ENCODE measurements at regions of chr2 and their contacts with region 1.

Region 1: DNA sequence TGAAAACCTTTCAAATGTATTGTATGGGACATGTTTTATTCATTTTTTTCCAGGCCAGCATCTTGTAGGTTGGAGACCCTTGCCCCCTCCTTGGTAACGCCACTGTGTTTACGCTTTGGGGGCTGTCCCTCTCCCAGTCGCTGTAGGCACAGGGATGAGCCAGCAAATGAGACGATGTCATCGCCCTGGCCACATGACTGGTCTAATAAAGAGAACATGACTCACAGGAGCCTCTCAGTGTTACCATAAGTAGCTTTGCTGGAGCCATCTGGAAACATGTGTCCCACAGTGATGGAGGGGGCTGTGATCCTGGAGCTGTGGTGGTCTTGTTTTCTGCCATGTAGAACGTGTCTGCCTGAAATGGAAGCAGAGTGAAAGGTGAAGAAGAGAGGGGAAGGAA is 78.9 kb downstream of the CD8B2 start:
- DNase-seq: peak; percentile 85
- H3K4me3 Mint-ChIP-seq: peak overlapping the region; percentile 8
- H3K27ac Mint-ChIP-seq: peak overlapping the region; percentile 82
- H3K4me1 Mint-ChIP-seq: peaks cover 42% of the 10 kb centered on the region
- H3K27me3 Mint-ChIP-seq: no peaks in the 10 kb centered on the region

Region 2: DNA sequence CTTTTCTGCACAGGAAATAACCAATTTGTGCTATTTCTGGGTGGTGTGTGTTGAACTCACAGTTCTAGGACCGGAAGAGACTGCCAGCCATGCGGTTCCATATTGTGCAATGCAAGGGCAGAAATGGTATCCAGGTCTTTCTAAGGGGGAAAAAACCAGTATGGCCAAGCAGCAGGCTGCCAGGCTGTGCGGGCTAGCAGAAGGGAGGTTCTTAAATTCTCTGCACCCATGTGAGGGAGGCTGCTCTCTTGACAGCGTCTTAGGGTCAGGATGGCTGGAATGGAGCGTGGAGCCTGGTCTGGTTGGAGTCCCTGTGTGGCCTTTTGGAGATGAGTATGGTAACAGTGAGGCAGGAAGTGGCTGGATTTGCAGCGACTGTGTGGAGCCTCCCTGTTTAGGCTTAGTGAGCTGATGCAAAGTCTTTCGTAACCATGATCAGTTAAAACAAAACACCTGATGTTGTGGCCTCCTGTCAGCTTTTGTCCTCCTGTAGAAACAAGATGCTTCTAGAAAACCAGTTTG is 768.7 kb before region 1 on chr2:
- CTCF ChIA-PET with region 1: no interaction called
- intact Hi-C with region 1: loop called (anchors 5 kb)
- DNase-seq: peak; percentile 66
- H3K4me3 Mint-ChIP-seq: peak overlapping the region; percentile 32
- H3K27ac Mint-ChIP-seq: peak overlapping the region; percentile 92
- H3K4me1 Mint-ChIP-seq: peaks cover 93% of the 10 kb centered on the region
- H3K27me3 Mint-ChIP-seq: no peaks in the 10 kb centered on the region

Region 3: GRCh38 chr2:106098081-106098480 is 468.0 kb before region 1 on chr2:
- CTCF ChIA-PET with region 1: interaction called, 3 read pairs
- intact Hi-C with region 1: loop called (anchors 5 kb)
- DNase-seq: peak; percentile 53
- H3K4me3 Mint-ChIP-seq: no peak overlapping the region
- H3K27ac Mint-ChIP-seq: no peak overlapping the region
- H3K4me1 Mint-ChIP-seq: peaks cover 40% of the 10 kb centered on the region
- H3K27me3 Mint-ChIP-seq: no peaks in the 10 kb centered on the region

Region 4: GRCh38 chr2:106205488-106205887 is 360.6 kb before region 1 on chr2:
- CTCF ChIA-PET with region 1: no interaction called
- intact Hi-C with region 1: no loop called
- DNase-seq: no peak
- H3K4me3 Mint-ChIP-seq: no peak overlapping the region
- H3K27ac Mint-ChIP-seq: no peak overlapping the region
- H3K4me1 Mint-ChIP-seq: peaks cover 3% of the 10 kb centered on the region
- H3K27me3 Mint-ChIP-seq: no peaks in the 10 kb centered on the region

Region 5: DNA sequence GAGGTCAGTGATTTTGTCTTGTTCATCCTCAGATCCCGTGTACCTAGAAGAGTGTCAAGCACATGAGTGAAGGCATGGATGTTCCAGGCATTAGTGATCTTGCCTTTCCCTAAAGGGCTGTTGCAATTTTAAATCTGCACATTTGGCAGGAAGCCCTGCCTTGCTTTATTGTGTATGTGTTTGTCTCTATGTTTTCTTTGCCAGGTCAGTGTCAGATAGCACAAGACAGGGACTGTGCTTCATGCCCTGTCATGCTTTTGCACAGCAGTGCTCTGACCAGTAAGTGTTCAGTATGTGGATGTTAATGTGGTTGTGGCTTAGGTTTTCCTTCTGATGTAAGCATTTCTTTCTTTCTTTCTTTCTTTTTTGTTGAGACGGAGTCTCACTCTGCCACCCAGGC is 229.3 kb before region 1 on chr2:
- CTCF ChIA-PET with region 1: no interaction called
- intact Hi-C with region 1: no loop called
- DNase-seq: no peak
- H3K4me3 Mint-ChIP-seq: no peak overlapping the region
- H3K27ac Mint-ChIP-seq: no peak overlapping the region
- H3K4me1 Mint-ChIP-seq: peaks cover 6% of the 10 kb centered on the region
- H3K27me3 Mint-ChIP-seq: no peaks in the 10 kb centered on the region

Region 6: GRCh38 chr2:106582148-106583143 is 16.4 kb after region 1 on chr2:
- CTCF ChIA-PET with region 1: interaction called, 16 read pairs
- intact Hi-C with region 1: loop called (anchors 1 kb)
- DNase-seq: peak; percentile 75
- H3K4me3 Mint-ChIP-seq: peak overlapping the region; percentile 80
- H3K27ac Mint-ChIP-seq: no peak overlapping the region
- H3K4me1 Mint-ChIP-seq: peaks cover 16% of the 10 kb centered on the region
- H3K27me3 Mint-ChIP-seq: peaks cover 35% of the 10 kb centered on the region

Region 7: GRCh38 chr2:106771811-106772210 is 205.8 kb after region 1 on chr2:
- CTCF ChIA-PET with region 1: no interaction called
- intact Hi-C with region 1: no loop called
- DNase-seq: no peak
- H3K4me3 Mint-ChIP-seq: no peak overlapping the region
- H3K27ac Mint-ChIP-seq: no peak overlapping the region
- H3K4me1 Mint-ChIP-seq: no peaks in the 10 kb centered on the region
- H3K27me3 Mint-ChIP-seq: peaks cover 12% of the 10 kb centered on the region